ENCODE measurements at regions of chr3 and their contacts with region 1.

Region 1: GRCh38 chr3:105366326-105367062 is at the start of gene ALCAM:
- DNase-seq: peak; percentile 91
- H3K4me3 ChIP-seq: peak within 1 kb of the TSS; percentile 68
- H3K27me3 ChIP-seq: no peaks in the 10 kb centered on the region
- CTCF ChIP-seq: peak; percentile 75
- polyA plus RNA-seq, gene ALCAM: 89.5 and 157 TPM in 2 replicates

Region 2: DNA sequence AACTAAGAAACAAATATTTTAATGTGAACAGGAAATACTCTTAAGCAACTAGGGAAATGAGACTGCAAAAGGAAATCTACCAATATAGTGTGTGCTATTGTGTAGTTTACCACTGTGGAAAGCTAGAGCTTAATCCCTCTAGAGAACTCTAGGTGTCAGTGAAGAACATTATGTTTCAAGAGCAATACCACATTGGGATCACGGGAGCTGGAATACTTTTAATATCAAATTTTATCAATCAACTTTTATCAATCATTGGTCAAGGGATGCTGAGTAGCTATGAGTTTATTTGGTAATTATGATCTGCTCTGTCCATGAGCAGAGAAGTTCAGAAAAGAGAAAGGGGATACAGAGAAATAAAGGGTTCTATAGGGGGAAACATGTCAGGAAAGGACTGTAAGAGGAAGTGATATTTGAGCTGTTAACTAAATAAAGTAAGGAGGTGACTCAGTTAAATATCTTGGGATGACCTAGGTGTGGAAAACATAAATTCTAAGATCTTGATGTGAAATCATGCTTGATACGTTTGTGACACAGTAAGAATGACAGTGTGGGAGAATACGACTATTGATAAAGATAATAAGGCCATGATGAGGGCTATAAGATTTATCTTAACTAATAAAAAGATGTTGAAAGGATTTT is 762.0 kb before region 1 on chr3:
- CTCF ChIA-PET with region 1: interaction called, 30 read pairs
- POLR2A ChIA-PET with region 1: no interaction called
- DNase-seq: no peak
- H3K4me3 ChIP-seq: no peak overlapping the region
- H3K27me3 ChIP-seq: no peaks in the 10 kb centered on the region; the same call in 1 of the 2 replicates
- CTCF ChIP-seq: peak; percentile 48

Region 3: DNA sequence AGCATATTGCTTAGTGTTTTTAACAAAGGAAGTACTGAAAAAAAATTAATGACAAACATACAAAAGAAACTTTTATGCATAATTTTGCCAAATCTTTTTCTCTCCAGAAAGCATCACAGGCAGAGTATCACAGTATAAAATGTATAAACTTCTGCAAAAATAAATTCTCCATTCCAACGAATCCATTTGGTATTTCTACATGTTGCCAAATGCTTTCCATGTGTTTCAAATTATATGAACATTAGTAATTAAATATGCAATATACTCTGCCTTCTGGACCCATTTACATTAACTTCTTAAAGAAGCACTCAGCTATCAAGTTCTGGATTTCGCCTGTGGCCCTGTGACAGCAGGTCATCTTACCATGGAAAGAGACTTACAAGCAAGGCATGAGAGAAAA is 188.9 kb before region 1 on chr3:
- CTCF ChIA-PET with region 1: no interaction called
- POLR2A ChIA-PET with region 1: no interaction called
- DNase-seq: no peak
- H3K4me3 ChIP-seq: no peak overlapping the region
- H3K27me3 ChIP-seq: no peaks in the 10 kb centered on the region
- CTCF ChIP-seq: no peak

Region 4: DNA sequence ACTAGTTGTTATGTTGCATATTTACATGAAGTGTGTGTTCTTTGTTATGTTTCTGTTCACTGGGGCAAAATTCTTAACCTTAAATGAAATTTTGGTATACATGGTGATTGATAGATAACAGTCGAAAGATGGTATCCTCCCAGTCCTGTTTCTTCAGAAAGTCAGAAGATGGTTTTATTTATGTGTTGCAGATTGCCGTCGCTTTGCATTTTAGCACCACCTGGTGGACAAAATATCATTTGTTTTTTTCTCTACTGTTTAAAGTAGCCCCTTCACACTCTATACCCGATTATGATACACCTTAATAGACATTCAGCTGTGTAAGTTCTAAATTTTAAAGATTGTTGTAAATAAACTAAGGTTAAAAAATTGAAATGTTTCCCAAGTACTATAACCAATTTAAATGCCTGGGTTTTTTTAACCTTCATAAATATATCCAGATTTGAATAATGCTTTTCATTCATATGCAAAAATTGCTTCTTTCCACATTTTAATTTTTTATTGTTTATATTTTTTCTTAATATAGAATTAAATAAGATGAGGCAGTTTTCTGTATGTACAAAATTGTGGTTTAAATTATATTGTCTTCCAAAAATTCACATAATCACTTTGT is 152.4 kb after region 1 on chr3:
- CTCF ChIA-PET with region 1: interaction called, 14 read pairs
- POLR2A ChIA-PET with region 1: no interaction called
- DNase-seq: no peak
- H3K4me3 ChIP-seq: no peak overlapping the region
- H3K27me3 ChIP-seq: no peaks in the 10 kb centered on the region
- CTCF ChIP-seq: peak; percentile 51